Natural killer cell (primary cell): ENCODE measurements at regions of chr16 and their contacts with region 1.

Region 1: DNA sequence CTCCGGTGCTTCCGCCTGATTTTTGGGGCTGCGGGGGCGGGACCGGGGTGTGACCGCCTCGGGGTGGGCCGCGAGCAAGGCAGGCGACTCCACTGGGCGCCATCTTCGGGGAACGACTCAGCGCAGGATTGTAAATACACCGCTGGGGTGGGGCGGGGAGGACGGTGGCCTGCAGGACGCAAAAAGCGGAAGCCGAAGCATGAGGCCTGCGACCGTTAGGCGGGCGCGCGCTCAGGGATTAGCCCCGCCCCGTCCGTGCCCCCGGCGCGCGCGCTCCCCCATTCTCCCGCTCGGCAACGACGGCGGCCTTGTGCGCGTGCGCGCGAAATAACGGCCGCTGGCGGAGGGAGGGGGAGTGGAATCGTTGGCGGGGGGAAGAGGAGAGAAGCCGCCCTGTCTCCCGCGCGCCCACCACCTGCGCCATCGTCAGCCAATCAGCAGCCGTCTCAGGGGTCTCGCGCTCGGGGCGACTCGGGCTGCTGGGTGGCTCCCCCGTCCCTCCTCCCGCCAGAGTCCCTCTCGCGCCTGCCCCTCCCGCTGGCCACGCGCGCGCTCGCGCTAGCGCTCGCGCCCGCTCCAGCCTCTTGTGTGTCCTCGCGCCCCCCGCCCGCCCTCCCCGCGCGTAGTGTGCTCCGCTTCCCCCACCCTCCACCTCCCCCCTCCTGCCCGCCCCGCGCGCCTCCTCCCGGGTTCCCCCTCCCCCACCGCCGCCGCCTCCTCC is 791 bp upstream of the MAZ start:
- DNase-seq: peak; percentile 96 to 98
- ATAC-seq: peak; percentile 66 to 88 (median 66)
- H3K4me3 ChIP-seq: peak overlapping the region; percentile 66
- H3K4me3 Mint-ChIP-seq: peak overlapping the region; percentile 100
- H3K27ac ChIP-seq: peak overlapping the region; percentile 87
- H3K27ac Mint-ChIP-seq: peak overlapping the region; percentile 98 to 99
- H3K4me1 ChIP-seq: peaks cover 44% of the 10 kb centered on the region
- H3K4me1 Mint-ChIP-seq: peaks cover 32 to 47% of the 10 kb centered on the region in 2 donors
- H3K27me3 ChIP-seq: no peaks in the 10 kb centered on the region
- H3K27me3 Mint-ChIP-seq: no peaks in the 10 kb centered on the region
- CTCF ChIP-seq: no peak

Region 2: DNA sequence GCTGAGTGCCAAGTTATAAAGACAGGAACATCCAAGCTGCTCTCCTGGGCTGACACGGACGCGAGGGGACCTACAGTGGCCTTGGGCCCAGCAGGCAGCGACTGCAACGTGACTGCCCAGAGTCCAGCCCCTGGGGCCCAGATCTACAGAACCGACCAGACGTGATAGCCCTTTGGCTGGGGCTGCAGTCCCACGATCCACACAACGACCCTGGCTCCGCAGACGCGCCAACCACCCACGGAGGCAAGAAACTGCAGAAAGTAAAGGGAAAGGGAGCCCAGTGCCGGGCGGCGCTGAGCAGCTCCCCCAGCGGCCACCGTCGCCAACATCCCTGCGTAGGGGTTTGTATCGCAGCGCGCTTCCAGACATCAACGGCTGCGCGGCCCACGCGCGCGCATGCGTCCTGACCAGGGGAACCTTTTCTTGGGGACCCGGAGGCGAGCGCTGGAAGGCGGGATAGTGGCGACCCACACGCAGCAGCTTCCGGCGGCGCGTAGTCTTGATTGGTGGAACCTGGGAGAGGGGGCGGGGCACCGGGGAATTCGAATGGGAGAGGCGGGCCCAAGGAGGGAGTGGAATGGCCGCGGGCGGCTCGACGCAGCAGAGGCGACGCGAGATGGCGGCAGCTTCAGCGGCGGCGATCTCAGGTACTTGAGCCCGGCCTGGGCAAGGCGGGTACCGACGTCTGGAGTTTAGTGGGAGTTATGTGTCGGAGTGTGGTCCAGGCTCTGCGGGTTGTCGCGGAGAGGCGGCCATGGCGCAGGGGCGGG is 15.2 kb before region 1 on chr16 and contains the start of gene KIF22:
- intact Hi-C with region 1: loop called (anchors 1 kb)
- DNase-seq: peak; percentile 99 to 100
- ATAC-seq: peak; percentile 92 to 97 (median 93)
- H3K4me3 ChIP-seq: peak within 1 kb of the TSS; percentile 99
- H3K4me3 Mint-ChIP-seq: peak within 1 kb of the TSS; percentile 96
- H3K27ac ChIP-seq: peak within 1 kb of the TSS; percentile 82
- H3K27ac Mint-ChIP-seq: peak within 1 kb of the TSS; percentile 92
- H3K4me1 ChIP-seq: peaks cover 34% of the 10 kb centered on the region
- H3K4me1 Mint-ChIP-seq: peaks cover 43% of the 10 kb centered on the region in 2 donors
- H3K27me3 ChIP-seq: no peaks in the 10 kb centered on the region
- H3K27me3 Mint-ChIP-seq: no peaks in the 10 kb centered on the region
- CTCF ChIP-seq: peak; percentile 79
- total RNA-seq, gene KIF22: 73.4 to 96.0 (median 86.5) TPM

Region 3: DNA sequence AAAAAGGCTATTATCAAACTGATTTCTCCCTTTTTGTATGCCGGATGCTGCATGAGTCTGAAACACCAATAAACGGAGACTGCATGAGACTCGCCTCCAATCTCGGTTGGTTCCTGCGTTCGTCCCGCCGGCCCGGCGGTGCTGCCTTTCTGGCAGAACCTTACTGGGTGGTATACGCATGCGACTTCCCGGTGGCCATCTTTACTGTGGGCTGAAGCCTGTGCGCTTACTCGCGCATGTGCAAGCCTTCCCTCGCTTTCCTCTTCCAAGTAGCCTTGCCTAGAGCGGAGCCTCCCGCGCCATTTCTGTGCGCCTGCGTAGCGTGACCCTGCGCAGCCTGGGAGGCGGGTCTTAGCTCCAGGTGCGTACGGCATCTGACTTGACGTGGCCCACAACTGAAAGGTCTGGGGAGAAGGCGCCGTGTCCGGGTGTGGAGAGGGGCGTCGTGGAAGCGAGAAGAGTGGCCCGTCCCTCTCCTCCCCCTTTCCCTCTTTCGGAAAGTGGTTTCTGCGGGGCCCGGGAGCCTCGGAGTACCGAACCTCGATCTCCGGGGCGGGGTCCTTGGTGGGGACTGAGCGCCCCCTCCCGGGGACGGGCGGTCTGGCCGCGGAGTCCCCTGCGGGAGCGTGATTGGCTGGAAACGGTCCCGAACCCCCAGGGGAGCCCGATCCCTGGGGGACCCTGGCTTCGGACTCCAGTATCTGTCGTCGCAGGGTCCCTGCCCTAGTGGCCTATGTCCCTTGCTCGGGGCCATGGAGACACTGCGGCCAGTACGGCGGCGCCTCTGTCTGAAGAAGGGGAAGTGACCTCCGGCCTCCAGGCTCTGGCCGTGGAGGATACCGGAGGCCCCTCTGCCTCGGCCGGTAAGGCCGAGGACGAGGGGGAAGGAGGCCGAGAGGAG is 10.5 kb after region 1 on chr16 and contains the start of gene PAGR1:
- intact Hi-C with region 1: loop called (anchors 1 kb)
- DNase-seq: peak; percentile 96 to 100
- ATAC-seq: peak; percentile 76 to 91 (median 78)
- H3K4me3 ChIP-seq: peak within 1 kb of the TSS; percentile 79
- H3K4me3 Mint-ChIP-seq: peak within 1 kb of the TSS; percentile 99
- H3K27ac ChIP-seq: peak within 1 kb of the TSS; percentile 88
- H3K27ac Mint-ChIP-seq: peak within 1 kb of the TSS; percentile 94 to 98
- H3K4me1 ChIP-seq: peaks cover 63% of the 10 kb centered on the region
- H3K4me1 Mint-ChIP-seq: peaks cover 59 to 81% of the 10 kb centered on the region in 2 donors
- H3K27me3 ChIP-seq: no peaks in the 10 kb centered on the region
- H3K27me3 Mint-ChIP-seq: peaks cover 0 to 2% of the 10 kb centered on the region in 2 donors
- CTCF ChIP-seq: peak; percentile 97
- total RNA-seq, gene PAGR1: 8.9 to 16.2 (median 13.4) TPM

Region 4: GRCh38 chr16:29848420-29849297 is 43.1 kb after region 1 on chr16:
- intact Hi-C with region 1: no loop called
- DNase-seq: peak; percentile 75 to 89
- ATAC-seq: peak; percentile 85 to 97 (median 90)
- H3K4me3 ChIP-seq: no peak overlapping the region
- H3K4me3 Mint-ChIP-seq: no peak overlapping the region
- H3K27ac ChIP-seq: no peak overlapping the region
- H3K27ac Mint-ChIP-seq: peak overlapping the region; percentile 36 to 75
- H3K4me1 ChIP-seq: peaks cover 5% of the 10 kb centered on the region
- H3K4me1 Mint-ChIP-seq: peaks cover 0 to 6% of the 10 kb centered on the region in 2 donors
- H3K27me3 ChIP-seq: no peaks in the 10 kb centered on the region
- H3K27me3 Mint-ChIP-seq: no peaks in the 10 kb centered on the region
- CTCF ChIP-seq: peak; percentile 84

Region 5: GRCh38 chr16:29973384-29974246 is 168.1 kb after region 1 on chr16 and contains the start of gene TAOK2:
- intact Hi-C with region 1: loop called (anchors 5 kb)
- DNase-seq: peak; percentile 93 to 96
- ATAC-seq: peak; percentile 97 to 99 (median 97)
- H3K4me3 ChIP-seq: peak within 1 kb of the TSS; percentile 84
- H3K4me3 Mint-ChIP-seq: peak within 1 kb of the TSS; percentile 95
- H3K27ac ChIP-seq: peak within 1 kb of the TSS; percentile 71
- H3K27ac Mint-ChIP-seq: peak within 1 kb of the TSS; percentile 64 to 96
- H3K4me1 ChIP-seq: peaks cover 30% of the 10 kb centered on the region
- H3K4me1 Mint-ChIP-seq: peaks cover 28 to 52% of the 10 kb centered on the region in 2 donors
- H3K27me3 ChIP-seq: no peaks in the 10 kb centered on the region
- H3K27me3 Mint-ChIP-seq: no peaks in the 10 kb centered on the region
- CTCF ChIP-seq: no peak
- total RNA-seq, gene TAOK2: 35.3 to 42.8 (median 41.5) TPM

Region 6: DNA sequence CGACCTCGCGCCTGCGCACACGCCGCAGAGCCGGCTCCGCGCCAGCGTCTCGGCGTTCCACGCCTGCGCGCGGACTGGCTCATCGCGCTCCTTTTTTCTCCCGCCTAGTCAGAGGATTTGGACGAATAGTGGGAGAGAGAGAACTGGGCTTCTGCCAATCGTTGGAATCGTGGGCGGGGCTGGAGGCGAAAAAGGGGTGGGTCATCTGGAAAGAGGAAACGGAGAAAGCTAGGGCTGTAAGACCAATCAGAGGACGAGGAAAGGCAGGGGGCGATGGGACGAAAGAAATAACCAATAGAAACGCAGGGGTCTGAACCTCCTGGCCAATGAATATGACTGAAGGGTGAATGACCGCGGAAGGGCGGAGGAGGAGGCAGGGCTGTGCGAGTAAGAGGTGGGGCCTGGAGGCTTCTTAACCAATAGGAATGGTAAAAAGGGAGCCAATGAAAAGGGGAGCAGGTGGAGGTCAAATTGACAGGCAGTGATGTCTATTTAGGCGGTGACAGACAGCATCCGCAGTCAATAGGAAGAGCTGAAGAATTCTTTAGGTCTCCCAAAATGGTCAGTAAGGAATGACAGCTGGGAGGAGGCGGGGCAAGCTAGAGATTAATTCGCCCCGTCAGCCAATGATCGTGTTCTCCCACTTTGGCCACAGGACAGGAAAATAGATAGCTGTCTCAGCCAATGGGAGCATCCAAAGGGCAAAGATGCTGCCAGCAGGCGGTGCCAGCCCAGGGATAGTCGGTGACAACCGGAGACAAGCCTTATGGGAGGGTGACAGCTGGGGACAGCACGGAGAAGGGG is 565.1 kb after region 1 on chr16 and contains the start of gene TBC1D10B:
- intact Hi-C with region 1: loop called (anchors 5 kb)
- DNase-seq: peak; percentile 96 to 99
- ATAC-seq: peak; percentile 82 to 94 (median 82)
- H3K4me3 ChIP-seq: peak within 1 kb of the TSS; percentile 64
- H3K4me3 Mint-ChIP-seq: peak within 1 kb of the TSS; percentile 93
- H3K27ac ChIP-seq: peak within 1 kb of the TSS; percentile 70
- H3K27ac Mint-ChIP-seq: peak within 1 kb of the TSS; percentile 91 to 94
- H3K4me1 ChIP-seq: peaks cover 35% of the 10 kb centered on the region
- H3K4me1 Mint-ChIP-seq: peaks cover 48 to 59% of the 10 kb centered on the region in 2 donors
- H3K27me3 ChIP-seq: no peaks in the 10 kb centered on the region
- H3K27me3 Mint-ChIP-seq: peaks cover 0 to 3% of the 10 kb centered on the region in 2 donors
- CTCF ChIP-seq: no peak
- total RNA-seq, gene TBC1D10B: 43.0 to 55.3 (median 50.2) TPM